Activated CD4-positive, alpha-beta memory T cell treated with anti-CD3 and anti-CD28 coated beads for 36 hours (primary cell): ENCODE measurements at regions of chr3 and their contacts with region 1.

Region 1: GRCh38 chr3:151168269-151169094 is 34.5 kb downstream of the GPR171 start:
- DNase-seq: peak; percentile 89
- H3K4me3 Mint-ChIP-seq: no peak overlapping the region
- H3K27ac Mint-ChIP-seq: no peak overlapping the region
- H3K4me1 Mint-ChIP-seq: peaks cover 42% of the 10 kb centered on the region
- H3K27me3 Mint-ChIP-seq: peaks cover 2% of the 10 kb centered on the region

Region 2: DNA sequence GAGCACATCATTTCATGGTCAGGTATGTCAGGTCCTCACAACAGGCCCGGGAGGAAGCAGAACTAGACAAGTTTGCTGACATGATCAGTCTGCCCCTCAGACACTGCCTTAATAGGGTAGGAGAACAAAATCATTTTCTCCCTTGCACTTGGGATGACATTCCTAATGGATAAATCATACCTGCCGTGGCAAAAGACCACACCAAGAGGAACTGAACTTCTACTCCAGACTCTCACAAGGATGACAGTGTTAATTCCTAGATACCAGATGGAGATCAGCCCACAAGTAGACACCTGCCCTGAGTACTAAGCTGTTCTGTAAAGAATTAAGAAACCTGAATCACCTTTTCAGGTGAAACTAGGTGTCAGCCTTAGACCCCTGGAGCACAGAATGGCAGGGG is 425.0 kb before region 1 on chr3:
- CTCF ChIA-PET with region 1: no interaction called
- POLR2A ChIA-PET with region 1: no interaction called
- intact Hi-C with region 1: no loop called
- DNase-seq: peak; percentile 5
- H3K4me3 Mint-ChIP-seq: no peak overlapping the region
- H3K27ac Mint-ChIP-seq: peak overlapping the region; percentile 55
- H3K4me1 Mint-ChIP-seq: peaks cover 94% of the 10 kb centered on the region
- H3K27me3 Mint-ChIP-seq: no peaks in the 10 kb centered on the region

Region 3: DNA sequence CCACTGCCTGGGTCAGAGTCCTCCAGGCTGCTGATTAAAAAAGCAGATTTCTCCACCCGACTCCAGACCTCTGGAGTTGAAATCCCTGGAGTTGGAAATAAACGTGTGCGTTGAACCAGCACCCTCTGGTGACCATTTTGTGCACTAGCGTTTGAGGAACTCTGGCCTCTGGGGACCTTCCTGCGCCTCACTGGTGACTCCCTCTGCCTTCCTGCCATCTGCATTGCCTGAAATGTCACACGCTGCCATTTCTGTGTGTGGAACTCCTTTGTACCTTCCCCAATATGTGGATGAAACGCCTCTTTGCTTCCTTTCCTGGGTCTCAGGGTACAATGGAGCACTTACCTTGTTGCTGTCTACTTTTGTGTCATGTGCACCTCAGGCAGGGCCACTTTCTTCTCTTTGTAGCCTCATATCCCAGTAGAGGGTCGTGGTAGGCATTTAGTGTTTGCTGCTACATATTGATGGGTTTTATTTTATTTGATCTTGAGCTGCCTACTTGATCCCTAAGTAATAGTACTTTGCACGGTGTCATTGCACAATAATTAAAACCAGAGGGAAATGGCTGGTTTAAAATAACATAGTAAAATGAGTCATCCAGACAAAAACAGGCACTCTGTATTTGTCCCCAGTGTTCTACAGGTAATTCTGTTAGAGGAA is 22.3 kb before region 1 on chr3:
- CTCF ChIA-PET with region 1: interaction called, 15 read pairs
- POLR2A ChIA-PET with region 1: no interaction called
- intact Hi-C with region 1: no loop called
- DNase-seq: peak; percentile 70
- H3K4me3 Mint-ChIP-seq: no peak overlapping the region
- H3K27ac Mint-ChIP-seq: no peak overlapping the region
- H3K4me1 Mint-ChIP-seq: no peaks in the 10 kb centered on the region
- H3K27me3 Mint-ChIP-seq: no peaks in the 10 kb centered on the region

Region 4: GRCh38 chr3:151191095-151191494 is 22.6 kb after region 1 on chr3:
- CTCF ChIA-PET with region 1: interaction called, 24 read pairs
- POLR2A ChIA-PET with region 1: interaction called, 5 read pairs
- intact Hi-C with region 1: loop called (anchors 1 kb)
- DNase-seq: no peak
- H3K4me3 Mint-ChIP-seq: peak overlapping the region; percentile 47
- H3K27ac Mint-ChIP-seq: peak overlapping the region; percentile 84
- H3K4me1 Mint-ChIP-seq: peaks cover 63% of the 10 kb centered on the region
- H3K27me3 Mint-ChIP-seq: no peaks in the 10 kb centered on the region

Region 5: GRCh38 chr3:151227807-151228665 is 59.6 kb after region 1 on chr3:
- CTCF ChIA-PET with region 1: interaction called, 84 read pairs
- POLR2A ChIA-PET with region 1: interaction called, 4 read pairs
- intact Hi-C with region 1: loop called (anchors 1 kb)
- DNase-seq: peak; percentile 87
- H3K4me3 Mint-ChIP-seq: no peak overlapping the region
- H3K27ac Mint-ChIP-seq: peak overlapping the region; percentile 42
- H3K4me1 Mint-ChIP-seq: peaks cover 52% of the 10 kb centered on the region
- H3K27me3 Mint-ChIP-seq: no peaks in the 10 kb centered on the region

Region 6: GRCh38 chr3:151282921-151283320 is 114.4 kb after region 1 on chr3:
- CTCF ChIA-PET with region 1: interaction called, 157 read pairs
- POLR2A ChIA-PET with region 1: no interaction called
- intact Hi-C with region 1: loop called (anchors 1 kb)
- DNase-seq: no peak
- H3K4me3 Mint-ChIP-seq: no peak overlapping the region
- H3K27ac Mint-ChIP-seq: peak overlapping the region; percentile 62
- H3K4me1 Mint-ChIP-seq: peaks cover 32% of the 10 kb centered on the region
- H3K27me3 Mint-ChIP-seq: no peaks in the 10 kb centered on the region

Region 7: GRCh38 chr3:151327571-151328198 is 159.2 kb after region 1 on chr3:
- CTCF ChIA-PET with region 1: interaction called, 10 read pairs
- POLR2A ChIA-PET with region 1: no interaction called
- intact Hi-C with region 1: loop called (anchors 1 kb)
- DNase-seq: no peak
- H3K4me3 Mint-ChIP-seq: no peak overlapping the region
- H3K27ac Mint-ChIP-seq: no peak overlapping the region
- H3K4me1 Mint-ChIP-seq: peaks cover 11% of the 10 kb centered on the region
- H3K27me3 Mint-ChIP-seq: peaks cover 13% of the 10 kb centered on the region